GM18951 (cell line): ENCODE measurements at regions of chr11 and their contacts with region 1.

Region 1: DNA sequence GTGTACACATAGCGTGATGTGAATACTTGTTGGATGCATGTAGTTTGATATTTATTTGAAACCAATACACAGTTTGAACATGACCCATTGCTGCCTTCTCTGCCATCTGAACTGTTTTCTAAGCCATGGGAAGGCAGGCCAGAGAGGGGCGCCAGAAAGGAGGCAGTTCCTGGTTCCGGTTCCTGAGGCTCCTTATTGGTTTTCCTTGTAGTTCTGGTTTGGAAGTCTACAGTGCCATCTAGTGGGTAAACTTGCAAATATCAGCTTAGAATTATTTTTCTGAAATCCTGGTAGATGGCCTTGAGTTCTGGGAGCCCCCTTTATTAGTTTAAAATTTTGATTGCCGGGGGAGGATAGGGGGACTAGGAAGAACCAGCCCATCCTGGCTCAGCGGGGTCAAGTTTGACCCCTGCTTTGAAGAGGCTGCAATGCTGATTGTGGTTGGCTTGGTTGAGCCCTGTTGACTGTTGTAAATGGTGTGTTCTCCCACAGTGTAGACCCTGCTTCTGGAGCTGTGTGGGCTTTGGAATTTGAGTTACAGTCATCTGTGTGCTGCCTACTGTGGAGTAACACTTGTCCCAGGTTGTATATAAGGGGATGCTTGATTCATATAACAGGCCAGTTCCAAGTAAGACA is 48.4 kb downstream of the GRAMD1B start:
- POLR2A ChIP-seq: no peak

Region 2: GRCh38 chr11:123301696-123302400 is 176.6 kb before region 1 on chr11:
- in situ Hi-C with region 1: loop called (anchors 5 kb)
- POLR2A ChIP-seq: no peak

Region 3: GRCh38 chr11:123407130-123407995 is 71.1 kb before region 1 on chr11:
- in situ Hi-C with region 1: loop called (anchors 10 kb)
- POLR2A ChIP-seq: no peak

Region 4: GRCh38 chr11:123690485-123690884 is 212.0 kb after region 1 on chr11:
- in situ Hi-C with region 1: no loop called
- POLR2A ChIP-seq: no peak